A549 (cell line): ENCODE measurements at regions of chr17 and their contacts with region 1.

Region 1: GRCh38 chr17:43576563-43577229 is 30.6 kb upstream of the ETV4 start:
- DNase-seq: peak; percentile 76 to 80
- ATAC-seq: peak; percentile 72 to 88
- H3K4me3 ChIP-seq: no peak overlapping the region
- H3K27ac ChIP-seq: 0 out of 6 replicates have a peak overlapping the region, but pooled peaks of 1 of the 2 experiments have one; percentile 17
- H3K4me1 ChIP-seq: peaks cover 50% of the 10 kb centered on the region
- CTCF ChIP-seq: peak; percentile 99
- EP300 ChIP-seq: no peak
- POLR2A ChIP-seq: no peak
- RAD21 ChIP-seq: peak; percentile 99

Region 2: GRCh38 chr17:43517615-43518386 is 58.9 kb before region 1 on chr17:
- CTCF ChIA-PET with region 1: interaction called, 57 read pairs
- POLR2A ChIA-PET with region 1: no interaction called
- DNase-seq: no peak
- ATAC-seq: no peak
- H3K4me3 ChIP-seq: no peak overlapping the region
- H3K27ac ChIP-seq: no peak overlapping the region
- H3K4me1 ChIP-seq: no peaks in the 10 kb centered on the region
- CTCF ChIP-seq: no peak
- EP300 ChIP-seq: no peak
- POLR2A ChIP-seq: no peak
- RAD21 ChIP-seq: no peak

Region 3: DNA sequence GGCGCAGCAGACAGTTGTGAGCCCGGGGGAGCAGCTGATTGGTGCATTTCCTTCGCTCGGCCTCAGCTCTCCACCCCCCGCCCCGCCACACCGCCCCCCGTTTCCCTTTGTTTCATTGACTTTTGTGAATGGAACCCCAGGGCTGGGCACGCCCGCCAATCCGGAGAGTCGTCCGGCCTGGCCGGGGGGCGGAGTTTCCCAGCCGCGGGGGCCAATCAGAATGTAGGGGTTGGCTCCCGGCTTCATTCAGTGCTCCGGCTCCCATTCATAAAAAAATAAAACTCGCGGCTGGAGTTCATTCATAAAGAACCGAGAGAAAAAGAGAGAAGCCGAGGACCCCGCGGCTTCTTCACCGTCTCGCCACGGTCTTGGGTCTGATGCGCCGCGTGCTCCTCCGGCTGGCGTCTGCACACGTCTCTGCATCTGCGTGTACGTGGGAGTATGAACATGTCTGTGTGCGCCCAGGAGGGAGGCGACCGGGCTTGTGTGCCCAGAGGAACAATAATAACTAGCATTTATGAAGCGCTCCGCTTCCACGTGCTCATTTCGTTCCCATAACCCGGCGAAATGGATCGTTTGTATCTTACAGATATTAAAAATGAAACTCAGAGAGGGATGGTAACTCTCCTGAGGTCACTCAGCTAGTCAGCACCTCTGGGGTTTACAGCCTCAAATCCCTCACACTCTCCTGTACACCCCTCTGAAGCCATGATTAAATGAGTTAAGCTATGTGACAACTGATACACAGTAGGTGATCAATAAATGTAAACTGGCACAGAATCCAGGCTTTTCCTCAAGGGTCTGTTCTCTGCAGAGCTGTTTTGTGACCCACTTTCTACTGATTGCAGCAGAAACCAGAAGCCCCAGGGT is 30.1 kb before region 1 on chr17 and contains the start of gene ETV4:
- CTCF ChIA-PET with region 1: interaction called, 29 read pairs
- POLR2A ChIA-PET with region 1: interaction called, 4 read pairs
- DNase-seq: peak; percentile 96 to 100
- ATAC-seq: peak; percentile 76 to 86
- H3K4me3 ChIP-seq: peak within 1 kb of the TSS; percentile 60
- H3K27ac ChIP-seq: peak within 1 kb of the TSS; percentile 85 to 95
- H3K4me1 ChIP-seq: peaks cover 23% of the 10 kb centered on the region
- CTCF ChIP-seq: no peak
- EP300 ChIP-seq: no peak
- POLR2A ChIP-seq: no peak
- RAD21 ChIP-seq: no peak
- polyA plus RNA-seq, gene ETV4: 39.1 and 42.5 TPM in 2 replicates

Region 4: GRCh38 chr17:43591779-43592562 is 15.3 kb after region 1 on chr17:
- CTCF ChIA-PET with region 1: interaction called, 48 read pairs
- POLR2A ChIA-PET with region 1: no interaction called
- DNase-seq: no peak
- ATAC-seq: peak; percentile 9 to 30; a peak in 2 of 6 replicates
- H3K4me3 ChIP-seq: no peak overlapping the region
- H3K27ac ChIP-seq: peak overlapping the region in 1 of 2 experiments; percentile 35; a peak in 1 of 6 replicates
- H3K4me1 ChIP-seq: no peaks in the 10 kb centered on the region
- CTCF ChIP-seq: no peak
- EP300 ChIP-seq: no peak
- POLR2A ChIP-seq: no peak
- RAD21 ChIP-seq: no peak

Region 5: DNA sequence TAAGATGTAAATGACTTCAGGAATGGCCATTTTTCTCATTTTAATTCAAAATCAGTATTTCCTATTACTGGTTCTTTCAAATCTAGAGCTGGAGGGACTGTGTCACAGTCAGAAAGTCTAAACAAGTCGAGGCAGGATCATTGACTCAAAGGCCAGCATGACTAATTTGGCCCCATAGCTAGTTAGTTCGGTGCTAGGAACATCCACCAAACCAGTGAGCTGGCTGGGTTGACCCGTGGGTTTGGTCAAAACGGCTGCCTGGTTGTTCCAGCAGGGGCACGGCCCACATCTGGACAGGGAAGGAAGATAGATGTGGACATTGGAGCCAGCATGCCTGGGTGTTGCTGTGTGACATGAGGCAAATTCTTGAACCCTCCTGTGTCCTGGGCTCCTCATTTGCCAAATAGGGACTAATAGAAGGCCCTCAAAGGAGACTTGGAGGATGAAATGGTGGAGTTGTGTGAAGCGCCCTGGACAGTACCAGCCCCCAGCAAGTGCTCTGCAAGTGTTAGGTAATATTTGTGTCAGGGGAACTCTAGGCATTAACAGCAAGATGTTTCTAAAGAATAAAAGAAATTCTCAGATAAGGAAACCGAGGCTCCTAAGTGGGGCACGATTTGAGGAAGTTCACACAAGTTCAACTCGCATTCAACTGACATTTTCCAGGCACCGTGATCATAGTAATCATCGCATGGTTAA is 38.8 kb after region 1 on chr17:
- CTCF ChIA-PET with region 1: interaction called, 31 read pairs
- POLR2A ChIA-PET with region 1: no interaction called
- DNase-seq: no peak
- ATAC-seq: no peak
- H3K4me3 ChIP-seq: no peak overlapping the region
- H3K27ac ChIP-seq: no peak overlapping the region
- H3K4me1 ChIP-seq: 0 out of 3 replicates have a peak, but pooled peaks cover 10% of the 10 kb centered on the region
- CTCF ChIP-seq: no peak
- EP300 ChIP-seq: no peak
- POLR2A ChIP-seq: no peak
- RAD21 ChIP-seq: no peak

Region 6: GRCh38 chr17:43694077-43694870 is 117.6 kb after region 1 on chr17:
- CTCF ChIA-PET with region 1: interaction called, 257 read pairs
- POLR2A ChIA-PET with region 1: no interaction called
- DNase-seq: peak; percentile 80 to 90
- ATAC-seq: peak; percentile 83 to 94
- H3K4me3 ChIP-seq: no peak overlapping the region
- H3K27ac ChIP-seq: 0 out of 6 replicates have a peak overlapping the region, but pooled peaks of 1 of the 2 experiments have one; percentile 33
- H3K4me1 ChIP-seq: peaks cover 14% of the 10 kb centered on the region
- CTCF ChIP-seq: peak; percentile 100
- EP300 ChIP-seq: no peak
- POLR2A ChIP-seq: no peak
- RAD21 ChIP-seq: peak; percentile 100

Region 7: DNA sequence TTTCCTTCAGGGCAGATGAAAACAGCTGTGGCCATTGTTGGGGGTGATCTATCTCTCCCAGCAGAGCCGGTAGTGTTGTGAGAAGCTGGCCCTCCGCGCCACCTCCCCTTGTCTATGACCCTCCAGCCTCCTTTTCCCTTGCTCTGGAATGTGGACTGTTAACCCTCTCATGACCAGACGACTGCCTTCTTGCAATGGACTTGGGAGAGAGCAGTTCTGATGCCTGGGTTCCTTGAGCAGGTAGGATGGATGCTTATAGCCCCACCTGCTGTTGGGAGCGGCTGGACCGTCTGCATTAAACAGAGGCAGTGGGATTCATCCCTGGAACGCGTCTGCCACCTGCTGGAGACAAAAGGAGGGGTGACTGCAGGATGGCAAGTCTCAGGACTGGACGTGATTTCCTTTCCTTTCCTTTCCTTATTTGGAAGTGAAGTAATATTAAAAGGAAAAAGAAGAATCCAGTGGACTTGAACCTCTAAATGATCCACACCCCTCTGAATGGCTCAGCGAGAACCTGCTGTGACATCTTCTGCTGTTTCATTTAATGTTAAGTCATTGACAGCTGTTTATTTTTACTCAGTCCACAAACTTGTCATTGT is 183.7 kb after region 1 on chr17:
- CTCF ChIA-PET with region 1: interaction called, 220 read pairs
- POLR2A ChIA-PET with region 1: no interaction called
- DNase-seq: peak; percentile 96 to 98
- ATAC-seq: peak; percentile 86 to 92
- H3K4me3 ChIP-seq: no peak overlapping the region
- H3K27ac ChIP-seq: peak overlapping the region in 1 of 2 experiments; percentile 29; a peak in 1 of 6 replicates
- H3K4me1 ChIP-seq: peaks cover 12% of the 10 kb centered on the region
- CTCF ChIP-seq: peak; percentile 100
- EP300 ChIP-seq: no peak
- POLR2A ChIP-seq: no peak
- RAD21 ChIP-seq: peak; percentile 100